CD4-positive, alpha-beta memory T cell (primary cell): ENCODE measurements at regions of chr2 and their contacts with region 1.

Region 1: GRCh38 chr2:113248997-113249770 is 29.5 kb downstream of the PAX8 start:
- DNase-seq: peak; percentile 72 to 79 (median 74)
- H3K4me3 ChIP-seq: no peak overlapping the region
- H3K4me3 Mint-ChIP-seq: peak overlapping the region in 2 of 8 donors; percentile 43 to 45
- H3K27ac ChIP-seq: peak overlapping the region; percentile 6
- H3K27ac Mint-ChIP-seq: peak overlapping the region in 5 of 7 donors; percentile 62 to 80 (median 70)
- H3K4me1 ChIP-seq: peaks cover 53% of the 10 kb centered on the region
- H3K4me1 Mint-ChIP-seq: peaks cover 42 to 57% (median 49%) of the 10 kb centered on the region in 4 donors
- H3K27me3 ChIP-seq: no peaks in the 10 kb centered on the region
- H3K27me3 Mint-ChIP-seq: no peaks in the 10 kb centered on the region

Region 2: GRCh38 chr2:112904883-112905282 is 344.3 kb before region 1 on chr2:
- CTCF ChIA-PET with region 1: no interaction called
- POLR2A ChIA-PET with region 1: no interaction called
- intact Hi-C with region 1: no loop called
- DNase-seq: no peak
- H3K4me3 ChIP-seq: no peak overlapping the region
- H3K4me3 Mint-ChIP-seq: no peak overlapping the region
- H3K27ac ChIP-seq: no peak overlapping the region
- H3K27ac Mint-ChIP-seq: no peak overlapping the region
- H3K4me1 ChIP-seq: no peaks in the 10 kb centered on the region
- H3K4me1 Mint-ChIP-seq: no peaks in the 10 kb centered on the region
- H3K27me3 ChIP-seq: peaks cover 4% of the 10 kb centered on the region
- H3K27me3 Mint-ChIP-seq: peaks cover 0 to 2% of the 10 kb centered on the region in 2 donors

Region 3: GRCh38 chr2:113173542-113174395 is 75.4 kb before region 1 on chr2 and contains the start of gene PSD4:
- CTCF ChIA-PET with region 1: interaction called, 10 read pairs
- POLR2A ChIA-PET with region 1: interaction called, 6 read pairs
- intact Hi-C with region 1: no loop called
- DNase-seq: peak; percentile 89 to 94 (median 91)
- H3K4me3 ChIP-seq: peak within 1 kb of the TSS; percentile 81 to 82
- H3K4me3 Mint-ChIP-seq: peak within 1 kb of the TSS; percentile 88 to 99 (median 94)
- H3K27ac ChIP-seq: peak within 1 kb of the TSS; percentile 85
- H3K27ac Mint-ChIP-seq: peak within 1 kb of the TSS; percentile 92 to 100 (median 96)
- H3K4me1 ChIP-seq: peaks cover 80% of the 10 kb centered on the region
- H3K4me1 Mint-ChIP-seq: peaks cover 56 to 89% (median 71%) of the 10 kb centered on the region in 4 donors
- H3K27me3 ChIP-seq: no peaks in the 10 kb centered on the region
- H3K27me3 Mint-ChIP-seq: peaks cover 2% of the 10 kb centered on the region in 2 donors
- total RNA-seq, gene PSD4: 100.0 to 101 TPM

Region 4: GRCh38 chr2:113198790-113199612 is 50.2 kb before region 1 on chr2:
- CTCF ChIA-PET with region 1: interaction called, 90 read pairs
- POLR2A ChIA-PET with region 1: interaction called, 3 read pairs
- intact Hi-C with region 1: loop called (anchors 1 kb)
- DNase-seq: peak; percentile 42 to 70 (median 58)
- H3K4me3 ChIP-seq: no peak overlapping the region
- H3K4me3 Mint-ChIP-seq: no peak overlapping the region
- H3K27ac ChIP-seq: no peak overlapping the region
- H3K27ac Mint-ChIP-seq: peak overlapping the region in 2 of 7 donors; percentile 10 to 60
- H3K4me1 ChIP-seq: peaks cover 10% of the 10 kb centered on the region
- H3K4me1 Mint-ChIP-seq: peaks cover 9 to 42% (median 12%) of the 10 kb centered on the region in 4 donors
- H3K27me3 ChIP-seq: no peaks in the 10 kb centered on the region
- H3K27me3 Mint-ChIP-seq: no peaks in the 10 kb centered on the region

Region 5: DNA sequence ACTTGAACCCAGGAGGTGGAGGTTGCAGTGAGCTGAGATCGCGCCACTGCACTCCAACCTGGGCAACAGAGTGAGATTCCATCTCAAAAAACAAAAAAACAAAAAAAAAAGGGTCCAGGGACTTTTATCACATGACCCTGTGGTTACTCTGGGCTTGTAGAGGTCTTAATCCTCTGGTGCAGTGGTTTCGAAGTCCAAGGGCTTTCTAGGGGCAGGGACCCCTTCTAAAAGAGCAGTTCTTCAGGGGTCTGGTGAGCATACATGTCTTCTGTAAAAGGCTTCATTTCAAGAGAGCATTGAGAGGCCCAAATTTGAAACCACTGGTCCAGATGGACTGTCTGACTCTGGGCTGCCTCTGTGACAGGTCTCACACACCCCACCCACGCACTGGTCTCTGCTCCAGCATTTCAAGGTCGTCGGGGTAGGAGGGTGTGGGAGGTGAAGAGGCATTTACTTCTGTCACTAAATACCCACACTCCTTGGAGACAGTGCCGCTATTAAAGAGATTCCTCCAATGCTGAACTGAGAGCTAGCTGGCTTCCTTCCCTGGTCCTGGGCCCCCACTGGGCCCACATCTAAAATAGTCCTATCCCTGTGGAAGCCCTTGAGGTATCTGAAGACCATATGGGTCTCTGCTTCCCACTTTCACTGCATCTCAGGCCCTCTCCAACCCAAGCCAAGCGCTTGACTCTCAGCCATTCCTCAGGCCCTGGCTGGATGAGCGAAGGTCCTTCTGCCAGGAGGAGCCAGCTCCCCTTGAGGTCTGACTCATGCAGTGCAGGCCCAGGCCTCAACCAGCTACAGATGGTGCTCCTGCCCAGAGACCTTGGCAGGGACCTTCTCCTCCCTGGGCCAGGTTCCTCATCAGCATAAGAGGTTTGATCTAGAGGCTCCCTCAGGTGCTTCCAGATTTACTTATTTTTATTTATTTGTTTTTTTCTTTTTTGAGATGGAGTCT is 15.3 kb before region 1 on chr2:
- CTCF ChIA-PET with region 1: interaction called, 20 read pairs
- POLR2A ChIA-PET with region 1: interaction called, 10 read pairs
- intact Hi-C with region 1: no loop called
- DNase-seq: no peak
- H3K4me3 ChIP-seq: no peak overlapping the region
- H3K4me3 Mint-ChIP-seq: peak overlapping the region in 1 of 8 donors; percentile 54
- H3K27ac ChIP-seq: no peak overlapping the region
- H3K27ac Mint-ChIP-seq: no peak overlapping the region
- H3K4me1 ChIP-seq: peaks cover 10% of the 10 kb centered on the region
- H3K4me1 Mint-ChIP-seq: peaks cover 3 to 33% (median 7%) of the 10 kb centered on the region in 4 donors
- H3K27me3 ChIP-seq: no peaks in the 10 kb centered on the region
- H3K27me3 Mint-ChIP-seq: no peaks in the 10 kb centered on the region

Region 6: GRCh38 chr2:113370478-113371091 is 121.4 kb after region 1 on chr2:
- CTCF ChIA-PET with region 1: interaction called, 90 read pairs
- POLR2A ChIA-PET with region 1: interaction called, 3 read pairs
- intact Hi-C with region 1: loop called (anchors 1 kb)
- DNase-seq: peak; percentile 61 to 70 (median 66)
- H3K4me3 ChIP-seq: no peak overlapping the region
- H3K4me3 Mint-ChIP-seq: no peak overlapping the region
- H3K27ac ChIP-seq: no peak overlapping the region
- H3K27ac Mint-ChIP-seq: peak overlapping the region in 2 of 7 donors; percentile 4 to 76
- H3K4me1 ChIP-seq: no peaks in the 10 kb centered on the region
- H3K4me1 Mint-ChIP-seq: peaks cover 0 to 5% (median 1%) of the 10 kb centered on the region in 4 donors
- H3K27me3 ChIP-seq: no peaks in the 10 kb centered on the region
- H3K27me3 Mint-ChIP-seq: peaks cover 4 to 5% of the 10 kb centered on the region in 2 donors

Region 7: GRCh38 chr2:113390124-113390849 is 141.1 kb after region 1 on chr2:
- CTCF ChIA-PET with region 1: interaction called, 34 read pairs
- POLR2A ChIA-PET with region 1: no interaction called
- intact Hi-C with region 1: loop called (anchors 5 kb)
- DNase-seq: peak; percentile 70 to 84 (median 80)
- H3K4me3 ChIP-seq: peak overlapping the region; percentile 27 to 40
- H3K4me3 Mint-ChIP-seq: peak overlapping the region; percentile 61 to 86 (median 72)
- H3K27ac ChIP-seq: no peak overlapping the region
- H3K27ac Mint-ChIP-seq: peak overlapping the region; percentile 44 to 73 (median 67)
- H3K4me1 ChIP-seq: peaks cover 4% of the 10 kb centered on the region
- H3K4me1 Mint-ChIP-seq: peaks cover 5 to 16% (median 10%) of the 10 kb centered on the region in 4 donors
- H3K27me3 ChIP-seq: no peaks in the 10 kb centered on the region
- H3K27me3 Mint-ChIP-seq: peaks cover 1 to 6% of the 10 kb centered on the region in 2 donors